A673 (cell line): ENCODE measurements at regions of chr19 and their contacts with region 1.

Region 1: DNA sequence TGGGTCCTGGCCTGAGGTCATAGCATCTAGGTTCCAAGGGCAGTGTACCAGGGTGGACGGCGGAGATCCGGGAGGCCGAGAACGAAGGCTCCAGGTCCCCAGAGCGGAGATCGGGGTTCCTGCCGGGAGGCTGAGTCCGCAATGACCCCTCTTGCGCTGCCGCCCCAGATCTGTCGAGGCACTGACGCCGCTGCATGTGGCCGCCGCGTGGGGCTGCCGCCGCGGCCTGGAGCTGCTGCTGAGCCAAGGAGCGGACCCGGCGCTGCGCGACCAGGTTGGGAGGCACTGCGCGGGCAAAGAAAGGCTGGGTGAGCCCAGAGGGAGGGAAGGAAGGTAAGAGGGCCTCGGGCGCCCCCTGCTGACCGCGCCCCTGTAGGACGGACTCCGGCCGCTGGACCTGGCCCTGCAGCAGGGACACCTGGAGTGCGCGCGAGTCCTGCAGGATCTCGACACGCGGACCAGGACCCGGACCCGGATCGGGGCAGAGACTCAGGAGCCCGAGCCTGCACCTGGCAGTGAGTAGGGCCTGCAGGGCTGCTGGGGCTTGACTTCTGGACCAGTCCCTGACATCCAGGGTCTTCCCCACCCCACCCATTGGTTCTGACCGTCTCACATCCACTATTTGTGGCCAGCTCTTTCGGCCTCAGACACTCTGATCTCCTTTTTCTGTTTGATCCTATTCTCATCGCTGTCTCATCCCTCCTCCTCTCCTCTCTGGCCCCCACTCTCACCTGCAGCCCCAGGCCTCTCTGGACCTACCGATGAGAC is 971 bp downstream of the ANKLE1 start:
- DNase-seq: peak; percentile 89
- H3K4me3 ChIP-seq: peak overlapping the region; percentile 55
- H3K27ac ChIP-seq: peak overlapping the region; percentile 29
- H3K4me1 ChIP-seq: peaks cover 4% of the 10 kb centered on the region
- H3K27me3 ChIP-seq: no peaks in the 10 kb centered on the region
- CTCF ChIP-seq: peak; percentile 93

Region 2: GRCh38 chr19:16771618-16772017 is 511.1 kb before region 1 on chr19:
- CTCF ChIA-PET with region 1: no interaction called
- POLR2A ChIA-PET with region 1: no interaction called
- intact Hi-C with region 1: loop called (anchors 10 kb)
- DNase-seq: peak; percentile 90
- H3K4me3 ChIP-seq: no peak overlapping the region
- H3K27ac ChIP-seq: no peak overlapping the region
- H3K4me1 ChIP-seq: no peaks in the 10 kb centered on the region
- H3K27me3 ChIP-seq: no peaks in the 10 kb centered on the region
- CTCF ChIP-seq: peak; percentile 84

Region 3: DNA sequence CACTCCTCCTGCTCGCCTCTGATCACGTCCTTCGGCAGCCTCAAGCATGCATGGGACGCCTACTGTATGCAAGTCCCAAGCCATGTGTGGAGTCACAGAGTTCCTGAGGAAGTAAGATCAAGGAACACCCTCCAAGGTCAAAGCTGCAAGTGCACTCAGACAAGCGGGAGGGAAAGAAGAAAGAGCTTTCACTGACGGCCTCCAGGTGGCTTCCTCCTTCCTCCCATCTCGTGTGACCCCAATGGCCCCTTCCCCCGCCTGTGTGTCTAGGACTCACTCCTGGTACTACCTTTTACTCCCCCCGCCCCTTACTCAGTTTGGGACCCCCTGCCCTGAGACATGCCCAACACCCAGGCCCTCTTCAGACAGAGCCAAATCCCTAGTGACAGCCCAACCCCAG is 213.5 kb before region 1 on chr19:
- CTCF ChIA-PET with region 1: no interaction called
- POLR2A ChIA-PET with region 1: no interaction called
- intact Hi-C with region 1: loop called (anchors 5 kb)
- DNase-seq: no peak
- H3K4me3 ChIP-seq: no peak overlapping the region
- H3K27ac ChIP-seq: no peak overlapping the region
- H3K4me1 ChIP-seq: peaks cover 9% of the 10 kb centered on the region
- H3K27me3 ChIP-seq: no peaks in the 10 kb centered on the region
- CTCF ChIP-seq: no peak

Region 4: GRCh38 chr19:17205237-17206140 is 77.2 kb before region 1 on chr19:
- CTCF ChIA-PET with region 1: no interaction called
- POLR2A ChIA-PET with region 1: no interaction called
- intact Hi-C with region 1: loop called (anchors 2 kb)
- DNase-seq: peak; percentile 60
- H3K4me3 ChIP-seq: no peak overlapping the region
- H3K27ac ChIP-seq: no peak overlapping the region
- H3K4me1 ChIP-seq: no peaks in the 10 kb centered on the region
- H3K27me3 ChIP-seq: no peaks in the 10 kb centered on the region
- CTCF ChIP-seq: peak; percentile 74

Region 5: GRCh38 chr19:17294051-17294891 is 11.6 kb after region 1 on chr19:
- CTCF ChIA-PET with region 1: no interaction called
- POLR2A ChIA-PET with region 1: no interaction called
- intact Hi-C with region 1: no loop called
- DNase-seq: no peak
- H3K4me3 ChIP-seq: no peak overlapping the region
- H3K27ac ChIP-seq: no peak overlapping the region
- H3K4me1 ChIP-seq: peaks cover 8% of the 10 kb centered on the region
- H3K27me3 ChIP-seq: no peaks in the 10 kb centered on the region
- CTCF ChIP-seq: no peak

Region 6: GRCh38 chr19:17847538-17848366 is 565.1 kb after region 1 on chr19 and contains the start of gene JAK3:
- CTCF ChIA-PET with region 1: no interaction called
- POLR2A ChIA-PET with region 1: no interaction called
- intact Hi-C with region 1: no loop called
- DNase-seq: peak; percentile 88
- H3K4me3 ChIP-seq: peak within 1 kb of the TSS; percentile 43
- H3K27ac ChIP-seq: peak within 1 kb of the TSS; percentile 59
- H3K4me1 ChIP-seq: peaks cover 9% of the 10 kb centered on the region
- H3K27me3 ChIP-seq: no peaks in the 10 kb centered on the region
- CTCF ChIP-seq: no peak
- total RNA-seq, gene JAK3: 2.4 and 2.5 TPM in 2 replicates